Cardiac septum (tissue), 1 donor: ENCODE measurements at regions of chr7 and their contacts with region 1.

Region 1: GRCh38 chr7:80584778-80585177 is 53.7 kb upstream of the CD36 start:
- DNase-seq: no peak

Region 2: GRCh38 chr7:80439894-80440821 is 144.6 kb before region 1 on chr7:
- intact Hi-C with region 1: loop called (anchors 10 kb)
- DNase-seq: no peak

Region 3: GRCh38 chr7:80622541-80622940 is 37.8 kb after region 1 on chr7:
- intact Hi-C with region 1: loop called (anchors 5 kb)
- DNase-seq: no peak